MCF 10A (cell line): ENCODE measurements at regions of chr3 and their contacts with region 1.

Region 1: GRCh38 chr3:4978204-4978965 is 852 bp upstream of the BHLHE40 start:
- DNase-seq: peak; percentile 99
- H3K4me3 Mint-ChIP-seq: peak overlapping the region; percentile 94
- H3K27ac Mint-ChIP-seq: peak overlapping the region; percentile 93
- H3K4me1 Mint-ChIP-seq: peaks cover 26% of the 10 kb centered on the region
- H3K27me3 Mint-ChIP-seq: no peaks in the 10 kb centered on the region
- CTCF ChIP-seq: no peak

Region 2: GRCh38 chr3:4575381-4575780 is 403.0 kb before region 1 on chr3:
- CTCF ChIA-PET with region 1: no interaction called
- POLR2A ChIA-PET with region 1: no interaction called
- intact Hi-C with region 1: no loop called
- DNase-seq: peak; percentile 50
- H3K4me3 Mint-ChIP-seq: no peak overlapping the region
- H3K27ac Mint-ChIP-seq: peak overlapping the region; percentile 50
- H3K4me1 Mint-ChIP-seq: peaks cover 9% of the 10 kb centered on the region
- H3K27me3 Mint-ChIP-seq: no peaks in the 10 kb centered on the region
- CTCF ChIP-seq: no peak

Region 3: GRCh38 chr3:4656059-4656458 is 322.3 kb before region 1 on chr3:
- CTCF ChIA-PET with region 1: interaction called, 10 read pairs
- POLR2A ChIA-PET with region 1: no interaction called
- intact Hi-C with region 1: loop called (anchors 2 kb)
- DNase-seq: peak; percentile 71
- H3K4me3 Mint-ChIP-seq: no peak overlapping the region
- H3K27ac Mint-ChIP-seq: no peak overlapping the region
- H3K4me1 Mint-ChIP-seq: peaks cover 11% of the 10 kb centered on the region
- H3K27me3 Mint-ChIP-seq: no peaks in the 10 kb centered on the region
- CTCF ChIP-seq: peak; percentile 82

Region 4: GRCh38 chr3:4736284-4736861 is 242.0 kb before region 1 on chr3:
- CTCF ChIA-PET with region 1: interaction called, 5 read pairs
- POLR2A ChIA-PET with region 1: interaction called, 10 read pairs
- intact Hi-C with region 1: no loop called
- DNase-seq: peak; percentile 91
- H3K4me3 Mint-ChIP-seq: peak overlapping the region; percentile 25
- H3K27ac Mint-ChIP-seq: peak overlapping the region; percentile 53
- H3K4me1 Mint-ChIP-seq: peaks cover 28% of the 10 kb centered on the region
- H3K27me3 Mint-ChIP-seq: no peaks in the 10 kb centered on the region
- CTCF ChIP-seq: no peak

Region 5: DNA sequence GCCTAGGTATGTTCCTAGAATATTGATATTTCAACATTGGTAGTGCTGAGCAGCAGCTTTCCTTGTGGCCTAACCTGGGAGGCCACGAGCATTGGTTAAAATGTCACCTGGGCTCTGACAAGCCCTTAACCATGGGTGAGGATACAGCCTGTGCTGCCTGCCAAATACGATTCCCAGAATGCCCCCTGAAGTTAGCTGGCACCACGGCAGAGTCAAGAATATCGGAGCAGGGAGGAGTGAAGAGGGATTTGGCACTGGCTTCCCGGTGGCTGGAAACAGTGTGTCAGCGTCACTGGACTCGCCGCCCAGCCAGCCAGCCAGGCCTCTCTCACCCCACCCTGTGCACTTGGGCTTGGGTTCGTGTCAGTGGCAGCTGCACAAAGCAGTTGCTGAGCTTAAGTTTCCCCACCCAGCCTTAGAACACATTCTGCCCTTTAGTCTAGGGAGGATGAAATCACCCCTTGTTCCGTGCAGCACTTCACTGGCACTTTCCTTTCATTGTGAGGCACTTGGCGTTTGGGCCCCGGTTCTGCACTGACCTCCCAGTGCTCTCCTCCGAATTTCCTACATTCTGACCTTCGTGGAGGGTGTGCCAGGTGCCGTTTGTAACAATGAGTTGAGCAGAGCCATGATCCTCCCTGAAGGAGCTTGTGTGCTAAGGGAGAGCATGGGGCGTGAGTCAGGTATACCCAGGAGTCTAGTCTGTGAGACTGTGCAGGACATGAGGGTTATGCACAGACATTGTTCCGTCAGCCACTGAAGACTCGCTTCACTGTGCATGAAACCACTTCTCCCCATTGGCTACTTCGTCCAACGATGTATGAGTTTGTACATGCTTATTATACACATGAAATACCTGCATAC is 151.9 kb before region 1 on chr3:
- CTCF ChIA-PET with region 1: interaction called, 6 read pairs
- POLR2A ChIA-PET with region 1: interaction called, 19 read pairs
- intact Hi-C with region 1: loop called (anchors 2 kb)
- DNase-seq: peak; percentile 68
- H3K4me3 Mint-ChIP-seq: peak overlapping the region; percentile 55
- H3K27ac Mint-ChIP-seq: peak overlapping the region; percentile 92
- H3K4me1 Mint-ChIP-seq: peaks cover 61% of the 10 kb centered on the region
- H3K27me3 Mint-ChIP-seq: no peaks in the 10 kb centered on the region
- CTCF ChIP-seq: no peak

Region 6: GRCh38 chr3:4906107-4906621 is 72.2 kb before region 1 on chr3:
- CTCF ChIA-PET with region 1: interaction called, 4 read pairs
- POLR2A ChIA-PET with region 1: interaction called, 3 read pairs
- intact Hi-C with region 1: loop called (anchors 2 kb)
- DNase-seq: peak; percentile 67
- H3K4me3 Mint-ChIP-seq: no peak overlapping the region
- H3K27ac Mint-ChIP-seq: no peak overlapping the region
- H3K4me1 Mint-ChIP-seq: peaks cover 22% of the 10 kb centered on the region
- H3K27me3 Mint-ChIP-seq: no peaks in the 10 kb centered on the region
- CTCF ChIP-seq: no peak

Region 7: GRCh38 chr3:5016218-5017161 is 38.1 kb after region 1 on chr3:
- CTCF ChIA-PET with region 1: interaction called, 185 read pairs
- POLR2A ChIA-PET with region 1: interaction called, 251 read pairs
- intact Hi-C with region 1: no loop called
- DNase-seq: peak; percentile 59
- H3K4me3 Mint-ChIP-seq: no peak overlapping the region
- H3K27ac Mint-ChIP-seq: peak overlapping the region; percentile 76
- H3K4me1 Mint-ChIP-seq: peaks cover 55% of the 10 kb centered on the region
- H3K27me3 Mint-ChIP-seq: no peaks in the 10 kb centered on the region
- CTCF ChIP-seq: no peak

Region 8: GRCh38 chr3:5057857-5058324 is 79.5 kb after region 1 on chr3:
- CTCF ChIA-PET with region 1: interaction called, 8 read pairs
- POLR2A ChIA-PET with region 1: interaction called, 3 read pairs
- intact Hi-C with region 1: loop called (anchors 1 kb)
- DNase-seq: peak; percentile 89
- H3K4me3 Mint-ChIP-seq: no peak overlapping the region
- H3K27ac Mint-ChIP-seq: no peak overlapping the region
- H3K4me1 Mint-ChIP-seq: peaks cover 22% of the 10 kb centered on the region
- H3K27me3 Mint-ChIP-seq: peaks cover 11% of the 10 kb centered on the region
- CTCF ChIP-seq: peak; percentile 68

Region 9: DNA sequence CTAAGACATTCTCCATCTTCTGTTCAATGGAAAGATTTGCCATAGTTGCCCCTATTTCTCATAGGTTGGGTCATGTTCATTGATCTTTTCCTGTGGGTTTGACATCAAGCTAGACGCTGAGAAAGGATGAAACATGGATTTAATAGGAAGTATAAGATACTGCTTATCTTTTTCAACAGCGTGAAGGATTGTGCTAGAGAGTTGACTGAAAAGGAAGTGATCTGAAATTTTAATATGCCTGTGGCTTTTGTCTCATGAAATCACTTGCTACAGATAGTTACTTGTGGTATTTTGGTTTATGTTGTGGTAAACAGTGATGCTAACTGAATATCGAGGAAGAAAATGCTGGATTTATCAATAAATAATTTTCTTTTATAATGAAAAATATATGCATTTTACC is 652.0 kb after region 1 on chr3:
- CTCF ChIA-PET with region 1: no interaction called
- POLR2A ChIA-PET with region 1: no interaction called
- intact Hi-C with region 1: no loop called
- DNase-seq: no peak
- H3K4me3 Mint-ChIP-seq: no peak overlapping the region
- H3K27ac Mint-ChIP-seq: no peak overlapping the region
- H3K4me1 Mint-ChIP-seq: no peaks in the 10 kb centered on the region
- H3K27me3 Mint-ChIP-seq: no peaks in the 10 kb centered on the region
- CTCF ChIP-seq: no peak